ENCODE measurements at regions of chr2 and their contacts with region 1.

Region 1: DNA sequence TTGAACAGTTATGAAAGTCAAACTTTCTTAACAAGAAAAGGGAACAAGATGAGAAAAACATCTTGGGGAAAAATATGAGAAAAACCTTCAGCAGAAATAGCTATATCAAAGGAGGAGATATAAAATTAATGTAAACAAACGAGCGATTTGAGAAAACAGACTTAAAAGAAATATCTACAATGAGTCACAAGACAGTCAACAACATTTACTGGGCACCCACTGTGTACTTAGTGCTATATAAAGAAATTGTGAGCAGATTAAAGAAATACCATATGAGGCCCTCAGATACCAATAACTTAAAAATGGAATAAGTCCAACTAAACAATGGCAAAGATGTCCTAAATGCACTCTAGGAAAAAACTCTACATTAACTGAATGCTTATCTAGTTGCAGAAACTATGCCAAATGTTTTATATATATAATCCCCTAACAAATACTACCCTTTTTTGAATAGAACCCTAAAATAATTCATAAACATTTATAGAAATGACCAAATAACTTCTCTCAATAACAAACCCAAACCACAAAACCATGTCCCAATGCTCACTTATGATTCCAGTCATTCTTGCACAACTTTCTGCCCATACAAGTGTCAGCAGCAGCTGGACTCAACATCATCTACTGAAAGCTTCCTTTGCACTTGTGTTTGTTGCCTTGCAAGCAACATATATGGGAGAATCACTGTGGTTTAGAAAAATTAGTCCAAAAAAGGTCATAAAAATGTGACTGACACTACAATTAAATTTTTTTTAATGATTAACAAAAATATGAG is 83.5 kb downstream of the COBLL1 start:
- DNase-seq: no peak
- ATAC-seq: no peak
- H3K4me3 Mint-ChIP-seq: peak overlapping the region; percentile 73
- H3K27ac Mint-ChIP-seq: peak overlapping the region; percentile 72
- H3K4me1 Mint-ChIP-seq: peaks cover 80% of the 10 kb centered on the region
- H3K27me3 Mint-ChIP-seq: no peaks in the 10 kb centered on the region
- CTCF ChIP-seq: no peak

Region 2: GRCh38 chr2:164794432-164795231 is 36.5 kb after region 1 on chr2:
- CTCF ChIA-PET with region 1: no interaction called
- POLR2A ChIA-PET with region 1: interaction called, 3 read pairs
- intact Hi-C with region 1: loop called (anchors 2 kb)
- DNase-seq: no peak
- ATAC-seq: no peak
- H3K4me3 Mint-ChIP-seq: peak overlapping the region; percentile 2
- H3K27ac Mint-ChIP-seq: no peak overlapping the region
- H3K4me1 Mint-ChIP-seq: peaks cover 41% of the 10 kb centered on the region
- H3K27me3 Mint-ChIP-seq: no peaks in the 10 kb centered on the region
- CTCF ChIP-seq: no peak

Region 3: GRCh38 chr2:164868563-164869419 is 110.7 kb after region 1 on chr2:
- CTCF ChIA-PET with region 1: no interaction called
- POLR2A ChIA-PET with region 1: no interaction called
- intact Hi-C with region 1: loop called (anchors 1 kb)
- DNase-seq: no peak
- ATAC-seq: no peak
- H3K4me3 Mint-ChIP-seq: no peak overlapping the region
- H3K27ac Mint-ChIP-seq: peak overlapping the region; percentile 32
- H3K4me1 Mint-ChIP-seq: peaks cover 41% of the 10 kb centered on the region
- H3K27me3 Mint-ChIP-seq: no peaks in the 10 kb centered on the region
- CTCF ChIP-seq: no peak

Region 4: DNA sequence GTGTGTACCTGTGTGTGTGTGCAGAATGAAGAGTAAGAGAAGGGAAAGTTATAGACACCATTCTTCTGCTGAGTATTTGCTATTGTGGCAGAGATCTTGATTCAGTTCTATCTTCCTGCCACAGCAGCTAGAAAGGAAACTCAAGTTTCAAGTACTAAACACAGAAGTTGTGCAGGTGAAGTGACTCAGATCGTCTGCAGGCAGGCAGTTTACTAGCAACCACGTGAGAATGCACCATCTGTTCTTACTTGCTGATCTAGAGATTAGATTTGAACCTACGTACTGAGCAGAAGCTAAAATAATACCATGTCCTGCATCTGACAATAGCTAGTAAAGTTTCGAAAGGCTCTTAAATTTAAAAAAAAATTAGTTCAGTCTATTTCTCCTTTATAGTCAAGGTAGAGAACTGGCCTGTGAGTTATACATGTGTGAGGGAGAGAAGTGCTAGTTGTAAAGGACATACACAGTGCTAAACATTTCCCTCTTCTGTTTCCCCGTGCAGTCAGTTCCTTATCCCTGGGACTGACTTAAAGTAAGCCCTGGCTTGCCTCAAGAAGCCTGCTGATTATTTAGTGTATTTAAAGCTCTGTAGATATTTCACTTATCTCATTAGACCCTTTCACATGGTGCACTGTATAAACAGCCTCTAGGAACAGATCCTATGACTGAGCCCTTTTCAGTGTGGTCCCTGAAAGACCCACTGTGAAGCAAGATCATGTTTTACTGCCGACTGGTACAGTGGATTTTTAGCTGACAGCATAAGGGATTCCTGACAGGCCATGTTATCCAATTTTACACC is 152.2 kb after region 1 on chr2:
- CTCF ChIA-PET with region 1: interaction called, 11 read pairs
- POLR2A ChIA-PET with region 1: interaction called, 16 read pairs
- intact Hi-C with region 1: loop called (anchors 1 kb)
- DNase-seq: no peak
- ATAC-seq: peak; percentile 71
- H3K4me3 Mint-ChIP-seq: peak overlapping the region; percentile 32
- H3K27ac Mint-ChIP-seq: peak overlapping the region; percentile 68
- H3K4me1 Mint-ChIP-seq: peaks cover 39% of the 10 kb centered on the region
- H3K27me3 Mint-ChIP-seq: no peaks in the 10 kb centered on the region
- CTCF ChIP-seq: no peak

Region 5: DNA sequence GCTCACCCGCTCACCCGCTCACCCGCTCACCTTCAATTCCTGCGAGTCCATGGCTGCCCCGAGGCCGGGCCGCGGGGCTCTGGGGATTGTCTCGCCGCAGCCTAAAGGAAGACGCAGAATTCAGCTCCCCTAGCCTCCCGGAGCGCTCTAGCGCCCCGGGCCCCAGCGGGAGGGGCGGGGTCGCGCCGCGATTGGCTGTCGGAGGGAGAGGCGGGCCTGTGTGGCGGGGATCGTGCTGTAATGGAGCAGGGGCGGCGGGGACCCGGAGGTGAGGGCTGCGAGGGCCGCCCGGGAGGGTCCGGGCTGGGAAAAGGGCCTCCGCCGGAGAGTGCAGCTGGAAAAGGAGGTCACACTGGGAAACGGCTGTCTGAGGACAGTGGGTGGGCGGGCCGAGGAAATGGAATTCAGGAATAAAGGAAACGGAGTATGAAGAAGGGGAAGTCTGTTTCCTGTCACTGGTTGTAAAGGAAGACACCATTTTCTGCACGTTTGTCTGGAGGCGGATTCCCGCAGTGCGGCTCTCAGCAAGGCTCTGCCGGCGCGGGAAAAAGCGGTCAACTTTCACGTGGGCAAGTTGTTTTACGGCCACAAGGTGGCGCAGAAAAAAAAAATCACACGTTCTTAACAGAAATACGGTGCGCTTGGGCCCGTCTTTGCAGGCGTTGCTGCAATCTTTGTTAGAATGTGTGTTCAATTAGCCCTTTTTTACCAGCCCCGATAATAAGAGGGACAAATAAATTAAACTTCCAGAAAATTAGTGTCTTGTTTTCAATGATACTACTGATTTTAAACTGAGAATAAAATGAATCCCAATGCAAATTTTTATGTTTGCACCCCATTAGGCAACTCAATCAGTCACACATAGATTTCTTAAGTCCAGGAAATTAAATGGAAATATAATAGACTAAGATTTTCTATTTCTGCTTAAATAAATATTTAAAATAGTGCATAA is 1195.8 kb after region 1 on chr2 and contains the start of gene TTC21B:
- CTCF ChIA-PET with region 1: no interaction called
- POLR2A ChIA-PET with region 1: no interaction called
- intact Hi-C with region 1: loop called (anchors 10 kb)
- DNase-seq: peak; percentile 92
- ATAC-seq: peak; percentile 96
- H3K4me3 Mint-ChIP-seq: no peak within 1 kb of the TSS
- H3K27ac Mint-ChIP-seq: peak within 1 kb of the TSS; percentile 56
- H3K4me1 Mint-ChIP-seq: peaks cover 11% of the 10 kb centered on the region
- H3K27me3 Mint-ChIP-seq: no peaks in the 10 kb centered on the region
- CTCF ChIP-seq: no peak
- total RNA-seq, gene TTC21B: 24.9 and 29.2 TPM in 2 replicates